Lower lobe of right lung (tissue), 2 donors: ENCODE measurements at regions of chr11 and their contacts with region 1.

Region 1: GRCh38 chr11:63738720-63739360 is 29.7 kb downstream of the ZFTA start:
- DNase-seq: peak; percentile 69
- ATAC-seq: peak; percentile 83 to 85
- H3K4me3 ChIP-seq: no peak overlapping the region
- H3K27ac ChIP-seq: no peak overlapping the region
- H3K4me1 ChIP-seq: peaks cover 5% of the 10 kb centered on the region
- H3K27me3 ChIP-seq: no peaks in the 10 kb centered on the region
- CTCF ChIP-seq: peak; percentile 98

Region 2: GRCh38 chr11:63510360-63511047 is 228.3 kb before region 1 on chr11:
- intact Hi-C with region 1: no loop called
- DNase-seq: peak; percentile 70
- ATAC-seq: peak; percentile 52 to 73
- H3K4me3 ChIP-seq: no peak overlapping the region
- H3K27ac ChIP-seq: no peak overlapping the region
- H3K4me1 ChIP-seq: peaks cover 30% of the 10 kb centered on the region
- H3K27me3 ChIP-seq: no peaks in the 10 kb centered on the region
- CTCF ChIP-seq: no peak

Region 3: DNA sequence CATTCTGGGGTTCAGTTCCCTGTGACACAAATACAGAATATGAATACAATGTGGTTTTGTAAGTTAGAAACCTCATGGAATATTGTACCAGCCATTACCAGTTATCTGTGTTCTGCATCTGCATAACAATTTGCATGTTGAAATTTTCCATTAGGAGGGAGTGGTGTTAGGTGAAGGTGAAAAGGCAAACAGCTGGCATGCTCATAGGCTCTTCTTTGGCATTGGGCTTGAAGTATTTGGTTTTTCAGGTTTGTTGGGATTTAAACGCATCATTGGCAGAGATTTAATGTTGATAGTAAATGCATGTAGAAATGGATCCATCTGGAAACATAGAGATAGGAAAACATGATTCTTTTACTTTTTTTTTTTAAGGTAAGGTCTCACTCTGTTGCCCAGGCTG is 38.9 kb before region 1 on chr11:
- intact Hi-C with region 1: loop called (anchors 5 kb)
- DNase-seq: no peak
- ATAC-seq: no peak
- H3K4me3 ChIP-seq: no peak overlapping the region
- H3K27ac ChIP-seq: no peak overlapping the region
- H3K4me1 ChIP-seq: peaks cover 14% of the 10 kb centered on the region
- H3K27me3 ChIP-seq: no peaks in the 10 kb centered on the region
- CTCF ChIP-seq: no peak

Region 4: DNA sequence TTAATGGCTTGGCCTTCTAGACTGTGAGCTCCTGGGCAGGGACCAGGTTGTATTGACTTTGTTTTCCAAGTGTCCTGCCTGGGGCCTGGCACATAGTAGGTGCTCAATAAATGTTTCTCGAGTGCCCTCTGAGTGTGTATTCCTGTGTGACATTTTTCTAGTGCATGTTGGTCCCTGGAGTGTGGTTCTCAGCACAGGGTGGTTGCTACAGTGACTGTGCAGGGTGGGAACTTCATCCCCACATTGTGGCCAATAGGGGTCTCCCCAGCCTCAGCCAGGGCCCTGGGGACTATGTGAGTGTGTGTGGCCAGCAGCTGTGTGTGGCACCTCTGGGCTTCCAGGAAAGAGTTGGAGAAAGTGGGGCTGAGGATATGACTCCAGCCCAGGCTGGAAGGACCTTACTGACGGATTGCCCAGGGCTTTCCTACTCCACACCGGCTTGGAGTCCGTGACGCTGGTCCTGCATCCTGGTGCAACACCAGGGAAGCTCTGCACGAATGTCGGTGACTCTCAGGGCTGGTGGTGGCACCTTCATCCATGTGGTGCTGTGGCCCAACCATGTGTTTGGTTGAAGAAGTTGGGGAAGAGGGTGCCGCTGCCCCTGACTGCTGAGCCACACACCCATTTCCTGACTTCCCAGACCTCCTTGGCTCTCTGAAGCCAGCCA is 91.1 kb after region 1 on chr11:
- intact Hi-C with region 1: no loop called
- DNase-seq: no peak
- ATAC-seq: peak in 1 of 2 donors; percentile 44
- H3K4me3 ChIP-seq: no peak overlapping the region
- H3K27ac ChIP-seq: no peak overlapping the region
- H3K4me1 ChIP-seq: no peaks in the 10 kb centered on the region
- H3K27me3 ChIP-seq: no peaks in the 10 kb centered on the region
- CTCF ChIP-seq: no peak

Region 5: DNA sequence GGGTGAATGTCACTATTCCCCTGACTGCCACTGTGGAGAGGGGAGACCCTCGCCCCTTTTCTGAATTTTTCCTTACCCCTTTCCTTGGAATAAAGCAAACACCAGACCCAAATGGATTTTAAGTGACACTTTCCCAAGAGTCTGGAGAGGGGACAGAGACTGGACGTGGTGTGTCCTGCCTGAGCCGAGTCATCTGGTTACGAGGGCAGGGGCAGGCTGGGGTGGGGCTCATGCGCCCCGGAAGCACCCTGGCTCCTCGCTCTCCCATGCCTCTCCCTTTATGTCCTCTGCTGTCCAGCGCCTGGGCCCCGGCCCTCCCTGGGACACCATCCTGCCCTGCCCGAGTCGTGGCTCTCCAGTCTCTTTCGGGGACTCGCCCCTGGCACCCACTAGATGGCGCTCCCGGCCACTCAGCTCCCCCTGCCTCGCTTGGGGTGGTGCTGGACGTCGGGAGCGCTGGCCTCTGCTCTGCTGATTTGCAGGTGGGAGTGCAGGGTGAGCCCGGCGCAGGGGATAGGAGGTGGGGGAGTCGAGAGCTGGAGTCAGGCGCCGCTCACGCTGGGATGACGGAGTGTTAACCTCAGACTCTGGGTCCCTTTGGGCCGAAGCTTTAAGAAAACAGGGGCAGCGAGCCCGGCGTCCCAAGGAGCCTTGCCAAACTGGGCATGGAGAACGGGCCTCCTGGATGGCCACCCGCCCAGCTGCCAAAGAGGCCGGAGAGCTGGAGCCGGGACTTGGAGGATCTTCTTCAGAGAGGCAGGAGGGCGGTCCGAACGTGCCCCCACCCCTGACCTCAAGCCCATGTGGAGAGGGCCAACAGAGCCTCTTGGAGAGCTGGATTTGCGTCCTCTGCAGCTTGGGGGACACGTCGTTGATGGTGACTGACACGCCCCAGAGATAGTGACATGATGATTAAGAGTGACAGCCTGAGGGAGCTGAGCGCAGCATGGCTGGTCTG is 710.0 kb after region 1 on chr11:
- intact Hi-C with region 1: no loop called
- DNase-seq: peak; percentile 89
- ATAC-seq: peak; percentile 96 to 97
- H3K4me3 ChIP-seq: peak overlapping the region; percentile 46
- H3K27ac ChIP-seq: peak overlapping the region; percentile 33
- H3K4me1 ChIP-seq: peaks cover 16% of the 10 kb centered on the region
- H3K27me3 ChIP-seq: peaks cover 10% of the 10 kb centered on the region
- CTCF ChIP-seq: peak; percentile 77